ENCODE measurements at regions of chr22 and their contacts with region 1.

Region 1: DNA sequence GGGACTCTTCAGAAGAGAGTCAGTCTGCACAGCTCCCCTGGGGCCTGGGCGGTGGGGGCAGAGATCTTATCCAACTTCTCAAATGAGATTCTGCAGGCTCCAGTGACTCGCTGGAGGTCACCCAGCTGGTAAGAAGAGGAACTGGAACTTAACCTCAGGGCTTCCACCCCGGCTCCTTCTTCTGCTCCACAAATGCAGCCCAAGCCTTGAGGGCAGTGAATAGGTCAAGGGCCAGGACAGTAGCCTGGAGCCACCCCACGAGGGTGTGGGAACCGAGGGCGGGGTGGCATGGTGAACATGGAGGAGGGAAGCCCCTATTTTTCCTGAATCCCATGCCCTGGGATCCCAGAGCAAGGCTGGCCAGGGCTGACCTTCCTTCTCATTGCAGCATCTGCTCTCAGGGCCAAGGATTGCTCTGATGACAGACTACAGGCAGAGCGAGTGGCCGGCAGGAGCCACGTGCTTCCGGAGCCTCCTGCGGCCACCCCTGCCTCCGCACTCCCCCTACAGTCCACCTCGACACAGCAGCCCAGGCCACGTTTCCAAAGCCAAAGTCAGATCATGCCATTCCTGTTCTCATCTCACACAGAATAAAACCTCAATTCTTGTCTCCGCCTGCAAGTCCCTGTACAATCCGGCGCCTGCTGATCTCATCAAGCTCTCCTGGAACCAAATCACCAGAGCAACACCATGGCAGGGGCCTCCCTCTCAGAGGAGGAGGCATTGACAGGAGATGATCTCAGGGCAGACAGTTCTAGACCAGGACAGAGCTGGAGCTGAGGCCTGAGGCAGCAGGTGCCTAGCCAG is 21.1 kb upstream of the UPK3A start:
- DNase-seq: peak; percentile 84
- ATAC-seq: peak; percentile 94
- H3K4me3 ChIP-seq: no peak overlapping the region
- H3K27ac ChIP-seq: no peak overlapping the region
- H3K4me1 ChIP-seq: peaks cover 2% of the 10 kb centered on the region; the same call in 1 of the 2 replicates
- H3K27me3 ChIP-seq: no peaks in the 10 kb centered on the region
- CTCF ChIP-seq: peak; percentile 92
- POLR2A ChIP-seq: no peak
- RAD21 ChIP-seq: peak; percentile 93

Region 2: GRCh38 chr22:44975427-44976262 is 288.0 kb before region 1 on chr22:
- CTCF ChIA-PET with region 1: no interaction called
- POLR2A ChIA-PET with region 1: no interaction called
- dilution Hi-C with region 1: no loop called
- in situ Hi-C with region 1: no loop called
- intact Hi-C with region 1: loop called (anchors 5 kb)
- DNase-seq: peak; percentile 76
- ATAC-seq: peak; percentile 99
- H3K4me3 ChIP-seq: no peak overlapping the region
- H3K27ac ChIP-seq: no peak overlapping the region
- H3K4me1 ChIP-seq: no peaks in the 10 kb centered on the region
- H3K27me3 ChIP-seq: peaks cover 30% of the 10 kb centered on the region
- CTCF ChIP-seq: peak; percentile 92
- POLR2A ChIP-seq: no peak
- RAD21 ChIP-seq: peak; percentile 78

Region 3: DNA sequence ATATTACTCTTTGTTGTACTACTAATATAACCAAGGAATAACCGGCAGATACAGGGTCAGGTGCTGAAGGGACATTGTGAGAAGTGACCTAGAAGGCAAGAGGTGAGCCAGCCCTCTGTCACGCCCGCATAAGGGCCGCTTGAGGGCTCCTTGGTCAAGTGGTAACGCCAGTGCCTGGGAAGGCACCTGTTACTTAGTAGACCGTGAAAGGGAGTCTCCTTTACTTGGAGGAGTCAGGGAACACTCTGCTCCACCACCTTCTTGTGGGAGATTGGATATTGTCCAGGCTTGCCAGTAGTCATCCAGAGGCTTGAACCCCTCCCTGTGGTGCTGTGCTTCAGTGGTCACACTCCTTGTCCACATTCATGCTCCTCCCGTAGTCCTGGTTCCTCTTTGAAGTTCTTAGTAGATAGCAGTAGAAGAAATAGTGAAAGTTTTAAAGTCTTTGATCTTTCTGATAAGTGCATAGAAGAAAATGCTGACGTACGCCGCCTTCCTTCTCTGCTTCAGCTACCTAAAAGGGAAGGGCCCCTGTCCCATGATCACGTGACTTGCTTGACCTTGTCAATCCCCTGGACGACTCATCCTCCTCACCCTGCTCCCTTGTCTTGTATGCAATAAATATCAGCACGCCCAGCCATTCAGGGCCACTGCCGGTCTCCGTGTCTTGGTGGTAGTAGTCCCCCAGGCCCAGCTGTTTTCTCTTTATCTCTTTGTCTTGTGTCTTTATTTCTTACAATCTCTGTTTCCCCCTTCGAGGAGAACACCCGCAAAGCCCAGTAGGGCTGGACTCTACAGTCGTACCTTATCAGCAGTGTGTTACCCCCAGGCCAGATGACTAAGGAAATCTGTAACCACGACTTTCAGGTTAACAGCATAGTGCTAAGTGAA is 93.8 kb before region 1 on chr22:
- CTCF ChIA-PET with region 1: no interaction called
- POLR2A ChIA-PET with region 1: no interaction called
- dilution Hi-C with region 1: no loop called
- in situ Hi-C with region 1: no loop called
- intact Hi-C with region 1: loop called (anchors 5 kb)
- DNase-seq: peak; percentile 44
- ATAC-seq: no peak
- H3K4me3 ChIP-seq: no peak overlapping the region
- H3K27ac ChIP-seq: no peak overlapping the region; the same call in 1 of the 2 replicates
- H3K4me1 ChIP-seq: peaks cover 4% of the 10 kb centered on the region; the same call in 1 of the 2 replicates
- H3K27me3 ChIP-seq: no peaks in the 10 kb centered on the region
- CTCF ChIP-seq: no peak
- POLR2A ChIP-seq: no peak
- RAD21 ChIP-seq: no peak

Measured in IMR-90 (cell line).